Endothelial cell of umbilical vein (primary cell): ENCODE measurements at regions of chr6 and their contacts with region 1.

Region 1: GRCh38 chr6:77457720-77458349 is 5.5 kb downstream of the HTR1B start:
- DNase-seq: peak; percentile 93
- H3K4me3 ChIP-seq: peak overlapping the region in 1 of 3 experiments; percentile 14
- H3K27ac ChIP-seq: peak overlapping the region; percentile 85
- H3K4me1 ChIP-seq: peaks cover 46% of the 10 kb centered on the region
- H3K27me3 ChIP-seq: no peaks in the 10 kb centered on the region
- CTCF ChIP-seq: peak; percentile 71 to 81
- POLR2A ChIP-seq: no peak

Region 2: GRCh38 chr6:75934643-75935472 is 1523.0 kb before region 1 on chr6:
- CTCF ChIA-PET with region 1: interaction called, 105 read pairs
- POLR2A ChIA-PET with region 1: no interaction called
- dilution Hi-C with region 1: no loop called
- intact Hi-C with region 1: loop called (anchors 1 kb)
- DNase-seq: peak; percentile 77
- H3K4me3 ChIP-seq: peak overlapping the region in 2 of 3 experiments; percentile 35 to 51
- H3K27ac ChIP-seq: no peak overlapping the region
- H3K4me1 ChIP-seq: peaks cover 4% of the 10 kb centered on the region
- H3K27me3 ChIP-seq: no peaks in the 10 kb centered on the region
- CTCF ChIP-seq: peak; percentile 68 to 75
- POLR2A ChIP-seq: no peak

Region 3: DNA sequence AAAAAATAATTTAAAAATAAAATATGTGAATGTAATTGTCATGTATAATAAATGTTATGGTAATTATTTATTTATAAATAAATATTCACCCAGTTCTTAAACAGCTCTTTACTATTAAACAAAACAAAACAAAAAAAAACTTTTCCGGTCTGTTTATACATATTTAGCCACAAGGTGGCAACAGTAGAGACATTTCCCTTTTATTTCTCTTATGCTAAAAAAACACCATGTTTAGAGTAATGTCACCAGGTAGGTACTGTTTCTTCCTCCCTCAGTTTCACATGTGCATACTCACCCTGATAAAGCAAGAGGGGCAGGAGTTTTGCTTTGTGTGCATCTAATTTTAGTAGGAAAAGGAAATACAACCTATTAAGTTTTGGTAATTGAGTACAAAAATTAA is 775.0 kb before region 1 on chr6:
- CTCF ChIA-PET with region 1: interaction called, 63 read pairs
- POLR2A ChIA-PET with region 1: no interaction called
- dilution Hi-C with region 1: no loop called
- intact Hi-C with region 1: loop called (anchors 1 kb)
- DNase-seq: peak; percentile 40
- H3K4me3 ChIP-seq: no peak overlapping the region
- H3K27ac ChIP-seq: no peak overlapping the region
- H3K4me1 ChIP-seq: peaks cover 8% of the 10 kb centered on the region
- H3K27me3 ChIP-seq: no peaks in the 10 kb centered on the region
- CTCF ChIP-seq: peak in 1 of 2 donors; percentile 22
- POLR2A ChIP-seq: no peak

Region 4: DNA sequence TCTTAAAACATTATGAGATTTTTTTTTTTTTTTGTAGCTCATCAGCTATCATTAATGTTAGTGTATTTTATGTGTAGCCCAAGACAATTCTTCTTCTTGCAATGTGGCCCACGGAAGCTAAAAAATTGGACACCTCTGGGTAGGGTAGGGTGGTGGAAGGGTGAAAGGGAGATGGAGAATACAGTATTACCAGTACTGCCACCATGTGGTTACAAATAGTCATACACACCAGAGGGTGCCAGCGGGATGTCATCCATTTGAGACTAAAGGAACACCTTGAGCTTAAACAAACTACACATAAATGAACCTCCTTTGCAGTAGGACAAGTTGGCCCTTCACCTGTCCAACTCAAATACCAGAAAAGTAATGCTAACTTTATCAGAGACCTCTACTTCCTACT is 596.4 kb before region 1 on chr6:
- CTCF ChIA-PET with region 1: no interaction called
- POLR2A ChIA-PET with region 1: no interaction called
- dilution Hi-C with region 1: no loop called
- intact Hi-C with region 1: loop called (anchors 5 kb)
- DNase-seq: peak; percentile 9
- H3K4me3 ChIP-seq: no peak overlapping the region
- H3K27ac ChIP-seq: no peak overlapping the region
- H3K4me1 ChIP-seq: no peaks in the 10 kb centered on the region
- H3K27me3 ChIP-seq: no peaks in the 10 kb centered on the region
- CTCF ChIP-seq: peak; percentile 4 to 11
- POLR2A ChIP-seq: no peak

Region 5: GRCh38 chr6:77173472-77174074 is 284.3 kb before region 1 on chr6:
- CTCF ChIA-PET with region 1: no interaction called
- POLR2A ChIA-PET with region 1: no interaction called
- dilution Hi-C with region 1: no loop called
- intact Hi-C with region 1: loop called (anchors 1 kb)
- DNase-seq: no peak
- H3K4me3 ChIP-seq: no peak overlapping the region
- H3K27ac ChIP-seq: no peak overlapping the region
- H3K4me1 ChIP-seq: no peaks in the 10 kb centered on the region
- H3K27me3 ChIP-seq: no peaks in the 10 kb centered on the region
- CTCF ChIP-seq: no peak
- POLR2A ChIP-seq: no peak

Region 6: GRCh38 chr6:77368660-77369313 is 89.0 kb before region 1 on chr6:
- CTCF ChIA-PET with region 1: no interaction called
- POLR2A ChIA-PET with region 1: interaction called, 3 read pairs
- dilution Hi-C with region 1: no loop called
- intact Hi-C with region 1: loop called (anchors 5 kb)
- DNase-seq: peak; percentile 30
- H3K4me3 ChIP-seq: peak overlapping the region; percentile 6 to 61 (median 50)
- H3K27ac ChIP-seq: no peak overlapping the region
- H3K4me1 ChIP-seq: no peaks in the 10 kb centered on the region
- H3K27me3 ChIP-seq: no peaks in the 10 kb centered on the region
- CTCF ChIP-seq: no peak
- POLR2A ChIP-seq: no peak